GM18951 (cell line): ENCODE measurements at regions of chr14 and their contacts with region 1.

Region 1: DNA sequence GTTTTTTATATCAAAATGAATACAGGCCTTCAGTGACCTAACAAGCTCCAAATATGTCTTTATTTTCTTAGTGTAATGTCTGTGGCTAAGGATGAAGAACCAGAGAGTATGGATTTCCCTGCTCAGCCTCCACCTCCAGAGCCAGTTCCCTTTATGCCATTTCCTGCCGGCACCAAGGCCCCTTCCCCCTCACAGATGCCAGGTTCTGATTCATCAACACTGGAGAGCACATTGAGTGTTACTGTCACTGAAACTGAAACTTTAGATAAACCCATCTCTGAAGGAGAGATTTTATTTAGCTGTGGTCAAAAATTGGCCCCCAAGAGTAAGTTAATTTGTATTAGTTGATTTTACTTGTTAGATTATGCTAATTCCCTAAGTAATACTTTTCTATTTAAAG is 61.0 kb downstream of the KIAA0586 start:
- POLR2A ChIP-seq: no peak

Region 2: DNA sequence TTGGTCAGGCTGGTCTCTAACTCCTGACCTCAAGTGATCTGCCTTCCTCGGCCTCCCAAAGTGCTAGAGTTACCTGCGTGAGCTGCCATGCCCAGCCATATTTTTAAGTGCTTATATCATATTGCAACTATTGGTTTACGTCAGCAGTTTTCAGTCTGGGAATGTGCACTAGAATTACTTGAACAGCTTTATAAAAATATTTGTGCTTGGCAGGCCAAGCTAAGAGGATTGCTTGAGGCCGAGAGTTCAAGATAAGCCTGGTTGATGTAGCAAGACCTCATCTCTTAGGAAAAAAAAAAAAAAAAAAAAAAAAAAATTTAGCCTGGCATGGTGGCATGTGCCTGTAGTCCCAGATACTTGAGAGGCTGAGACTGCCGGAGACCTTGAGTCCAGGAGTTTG is 43.9 kb before region 1 on chr14:
- in situ Hi-C with region 1: no loop called
- POLR2A ChIP-seq: no peak

Region 3: DNA sequence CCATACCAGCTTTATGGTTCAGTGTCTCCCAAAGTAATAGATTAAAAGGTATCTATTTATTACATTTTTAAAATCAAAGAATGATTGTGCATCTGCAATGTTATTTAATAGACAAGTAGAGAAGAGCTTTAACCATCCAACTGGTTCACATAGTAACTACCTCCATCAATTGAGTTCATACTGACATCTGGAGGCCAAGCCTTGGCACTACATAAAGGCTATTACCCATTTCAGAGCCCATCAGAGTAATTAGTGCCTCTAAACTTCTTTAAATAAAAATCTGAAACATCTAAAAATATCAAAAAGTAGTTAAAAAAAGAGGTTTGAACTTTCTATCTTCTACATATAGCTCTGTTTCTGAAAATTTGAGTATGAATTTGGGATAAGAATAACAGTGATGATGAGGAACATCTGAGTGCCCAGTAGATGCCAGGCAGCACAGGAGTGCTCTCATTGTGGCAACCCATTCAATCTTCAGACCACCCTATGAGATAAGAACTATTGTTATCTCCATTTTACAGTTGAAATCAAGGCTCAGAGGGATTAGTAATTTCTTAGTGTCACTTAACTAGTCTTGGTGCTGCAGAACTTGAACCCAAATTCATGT is 567.0 kb after region 1 on chr14:
- in situ Hi-C with region 1: loop called (anchors 10 kb)
- POLR2A ChIP-seq: no peak

Region 4: GRCh38 chr14:59428581-59429012 is 940.0 kb after region 1 on chr14:
- in situ Hi-C with region 1: loop called (anchors 25 kb)
- POLR2A ChIP-seq: no peak